GM23248 (cell line): ENCODE measurements at regions of chr2 and their contacts with region 1.

Region 1: GRCh38 chr2:64595397-64596160 is 58.1 kb downstream of the SERTAD2 start:
- DNase-seq: peak; percentile 47
- H3K4me3 ChIP-seq: no peak overlapping the region
- H3K27ac ChIP-seq: peak overlapping the region; percentile 62
- H3K4me1 ChIP-seq: peaks cover 33% of the 10 kb centered on the region
- H3K27me3 ChIP-seq: no peaks in the 10 kb centered on the region

Region 2: GRCh38 chr2:63628403-63628942 is 967.1 kb before region 1 on chr2:
- in situ Hi-C with region 1: no loop called
- DNase-seq: no peak
- H3K4me3 ChIP-seq: no peak overlapping the region
- H3K27ac ChIP-seq: no peak overlapping the region
- H3K4me1 ChIP-seq: no peaks in the 10 kb centered on the region
- H3K27me3 ChIP-seq: no peaks in the 10 kb centered on the region

Region 3: DNA sequence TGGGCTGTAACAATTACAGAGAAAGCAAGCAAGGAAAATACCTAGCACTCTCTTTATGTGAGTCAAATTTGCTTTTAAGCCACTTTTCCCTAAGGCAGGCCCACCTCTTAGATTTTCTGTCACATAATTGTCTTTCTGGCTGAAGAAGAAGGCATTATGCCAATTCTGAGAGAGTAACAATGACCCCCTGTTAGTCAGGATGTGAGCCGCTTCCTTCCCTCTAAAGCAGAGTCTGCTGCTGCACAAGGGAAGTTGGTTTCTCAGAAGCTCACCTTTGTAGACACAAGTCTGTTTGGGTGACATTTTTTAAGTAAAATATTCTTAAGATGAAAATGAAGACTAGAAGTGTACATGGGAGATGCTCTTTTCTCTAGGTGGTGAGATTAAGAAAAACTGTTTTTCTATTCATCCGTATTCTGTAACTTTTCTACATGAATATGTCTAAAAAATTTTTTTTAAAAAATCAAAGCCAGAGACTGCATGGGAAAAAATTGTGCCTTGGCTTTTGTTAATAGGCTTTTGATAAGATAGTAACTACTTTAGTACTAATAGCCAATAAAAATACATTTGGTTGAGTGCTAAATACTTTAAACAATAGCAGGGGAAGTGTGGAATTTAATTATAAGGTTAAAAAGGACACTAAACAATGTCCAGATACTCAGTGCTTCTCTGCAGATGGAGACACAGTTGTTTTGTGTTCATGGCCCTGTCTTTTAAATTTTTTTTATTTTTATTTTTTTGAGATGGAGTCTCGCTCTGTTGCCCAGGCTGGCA is 542.9 kb before region 1 on chr2:
- in situ Hi-C with region 1: no loop called
- DNase-seq: no peak
- H3K4me3 ChIP-seq: no peak overlapping the region
- H3K27ac ChIP-seq: no peak overlapping the region
- H3K4me1 ChIP-seq: no peaks in the 10 kb centered on the region
- H3K27me3 ChIP-seq: no peaks in the 10 kb centered on the region

Region 4: DNA sequence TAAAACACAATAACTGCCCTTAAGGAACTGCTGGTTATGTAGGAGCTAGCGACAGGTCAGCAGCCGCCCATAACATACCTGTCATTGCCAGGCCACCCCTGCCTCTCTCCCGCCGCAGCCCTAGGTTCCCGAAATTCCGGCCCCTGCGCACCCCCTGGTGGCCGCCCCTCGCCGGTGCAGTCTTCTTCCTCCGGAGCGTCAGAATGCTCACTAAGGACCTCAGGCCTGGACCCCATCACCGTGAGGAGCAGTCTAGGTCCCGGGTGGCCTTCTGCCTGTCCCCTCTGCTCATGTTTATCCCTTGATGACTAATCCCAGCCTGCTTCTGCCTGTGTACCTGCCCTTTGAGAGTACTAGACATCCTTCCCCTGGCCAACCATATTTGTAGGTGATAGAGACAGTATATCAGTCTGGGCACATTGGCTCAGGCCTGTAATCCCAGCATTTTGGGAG is 277.9 kb after region 1 on chr2:
- in situ Hi-C with region 1: loop called (anchors 10 kb)
- DNase-seq: peak; percentile 74
- H3K4me3 ChIP-seq: peak overlapping the region; percentile 38
- H3K27ac ChIP-seq: no peak overlapping the region
- H3K4me1 ChIP-seq: peaks cover 15% of the 10 kb centered on the region
- H3K27me3 ChIP-seq: 0 out of 2 replicates have a peak, but pooled peaks cover 3% of the 10 kb centered on the region